A549 (cell line): ENCODE measurements at regions of chr6 and their contacts with region 1.

Region 1: GRCh38 chr6:99425647-99426453 is 742 bp upstream of the PNISR start:
- DNase-seq: peak; percentile 48 to 93
- ATAC-seq: peak; percentile 83 to 84
- H3K4me3 ChIP-seq: peak overlapping the region; percentile 99
- H3K27ac ChIP-seq: peak overlapping the region; percentile 97 to 99
- H3K4me1 ChIP-seq: peaks cover 23% of the 10 kb centered on the region; the same call in 2 of the 3 replicates
- CTCF ChIP-seq: peak; percentile 48
- EP300 ChIP-seq: no peak
- POLR2A ChIP-seq: peak; percentile 26
- RAD21 ChIP-seq: peak; percentile 12 to 36; a peak in 1 of 5 replicates

Region 2: DNA sequence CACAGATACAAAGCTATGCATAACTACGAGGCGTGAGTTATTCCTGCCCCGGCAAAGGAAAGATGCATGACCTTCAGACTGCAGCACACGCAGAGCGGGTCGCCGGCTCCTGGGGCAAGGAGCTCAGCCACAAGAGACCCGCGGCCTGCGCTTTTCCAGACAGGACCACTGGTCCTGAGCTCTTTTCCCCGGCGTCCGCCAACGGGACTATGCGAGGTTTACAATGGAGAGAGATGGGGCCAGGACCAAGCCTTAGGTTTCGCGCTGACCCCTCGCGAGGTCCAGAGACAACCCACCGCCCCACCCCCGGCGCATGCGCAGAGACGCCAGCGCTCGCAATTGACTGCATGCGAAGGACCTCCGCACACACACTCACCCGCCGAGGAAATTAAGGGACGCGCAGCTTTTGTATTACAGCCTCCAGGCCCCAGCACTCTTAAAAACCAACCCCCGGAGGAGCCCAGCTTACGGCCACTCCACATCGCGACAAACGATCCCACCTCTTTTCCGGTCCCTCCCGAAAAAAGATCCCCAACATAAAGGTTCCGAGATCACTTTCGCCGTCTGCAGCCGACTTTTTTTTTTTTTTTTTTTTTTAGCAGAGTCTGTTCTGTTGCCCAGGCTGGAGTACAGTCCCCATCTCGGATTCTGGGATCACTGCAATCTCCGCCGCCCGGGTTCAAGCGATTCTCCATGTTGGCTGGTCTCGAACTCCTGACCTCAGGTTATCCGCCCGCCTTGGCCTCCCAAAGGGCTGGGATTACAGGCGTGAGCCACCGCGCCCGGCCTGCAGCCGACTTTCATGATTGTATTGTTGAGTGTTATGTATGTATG is 31.9 kb before region 1 on chr6 and contains the start of gene COQ3:
- CTCF ChIA-PET with region 1: interaction called, 4 read pairs
- POLR2A ChIA-PET with region 1: interaction called, 13 read pairs
- DNase-seq: peak; percentile 74 to 80
- ATAC-seq: peak; percentile 96 to 97
- H3K4me3 ChIP-seq: peak within 1 kb of the TSS; percentile 59
- H3K27ac ChIP-seq: peak within 1 kb of the TSS; percentile 83 to 95
- H3K4me1 ChIP-seq: peaks cover 4% of the 10 kb centered on the region; the same call in 1 of the 3 replicates
- CTCF ChIP-seq: no peak
- EP300 ChIP-seq: no peak
- POLR2A ChIP-seq: peak; percentile 43
- RAD21 ChIP-seq: no peak
- polyA plus RNA-seq, gene COQ3: 17.2 and 17.3 TPM in 2 replicates